PC-3 (cell line): ENCODE measurements at regions of chr18 and their contacts with region 1.

Region 1: DNA sequence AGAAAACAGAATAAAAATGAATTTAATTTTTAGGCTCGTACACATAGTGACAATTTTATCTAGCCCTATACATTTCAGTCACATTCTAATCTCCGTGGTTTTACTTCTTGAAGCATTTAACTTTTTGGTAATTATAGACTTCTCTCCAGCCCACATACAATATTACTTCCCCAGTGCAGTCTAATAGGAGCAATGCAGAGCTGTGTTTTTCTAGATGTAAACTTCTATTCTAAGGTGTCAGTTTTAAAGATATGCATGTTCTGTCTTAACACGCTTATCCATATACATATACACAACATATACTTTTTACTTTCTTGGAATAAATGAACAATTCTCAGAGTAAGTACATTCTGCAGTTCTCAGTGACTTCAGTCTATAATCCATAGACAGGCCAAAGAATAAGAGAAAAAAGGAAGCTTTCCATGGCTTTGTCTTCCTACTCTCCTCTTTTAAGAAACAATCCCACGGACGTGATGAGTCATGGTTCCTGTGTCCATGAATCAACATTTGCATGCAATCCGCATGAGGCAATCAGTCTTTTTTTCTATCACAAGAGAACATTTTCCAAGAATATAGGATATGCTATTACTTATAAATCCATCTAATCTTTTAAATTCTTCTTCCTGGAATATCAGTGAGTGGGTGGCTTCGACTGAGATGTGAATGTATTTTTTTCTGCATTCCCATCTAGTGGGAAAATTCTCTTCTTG is 42.8 kb downstream of the CCDC102B start:
- DNase-seq: peak; percentile 86
- ATAC-seq: peak; percentile 84
- H3K4me3 ChIP-seq: no peak overlapping the region
- H3K27ac ChIP-seq: peak overlapping the region; percentile 94
- H3K4me1 ChIP-seq: peaks cover 25% of the 10 kb centered on the region
- H3K27me3 ChIP-seq: no peaks in the 10 kb centered on the region
- CTCF ChIP-seq: no peak

Region 2: DNA sequence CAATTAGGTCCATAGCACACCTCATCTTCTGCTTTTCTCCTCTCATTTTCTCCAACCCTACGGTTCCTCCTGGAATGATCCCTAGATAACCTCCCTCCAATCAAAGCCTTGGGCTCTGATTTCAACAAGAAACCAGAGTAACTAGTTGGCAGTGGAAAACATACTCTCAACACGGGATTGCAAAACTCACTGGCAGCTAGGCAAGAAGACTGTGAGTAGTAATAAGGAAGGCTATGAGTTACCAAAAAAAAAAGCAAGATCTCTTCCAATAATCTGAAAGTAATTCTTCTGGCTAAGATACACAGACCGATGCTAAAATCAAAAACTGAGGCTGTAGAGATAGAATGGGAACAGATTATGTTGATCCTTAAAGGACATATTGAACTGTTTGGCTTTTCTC is 71.2 kb before region 1 on chr18:
- CTCF ChIA-PET with region 1: no interaction called
- POLR2A ChIA-PET with region 1: no interaction called
- intact Hi-C with region 1: no loop called
- DNase-seq: no peak
- ATAC-seq: no peak
- H3K4me3 ChIP-seq: no peak overlapping the region
- H3K27ac ChIP-seq: no peak overlapping the region
- H3K4me1 ChIP-seq: no peaks in the 10 kb centered on the region
- H3K27me3 ChIP-seq: no peaks in the 10 kb centered on the region
- CTCF ChIP-seq: no peak

Region 3: GRCh38 chr18:68797871-68798270 is 42.8 kb before region 1 on chr18 and contains the start of gene CCDC102B:
- CTCF ChIA-PET with region 1: no interaction called
- POLR2A ChIA-PET with region 1: interaction called, 5 read pairs
- intact Hi-C with region 1: loop called (anchors 2 kb)
- DNase-seq: peak; percentile 52
- ATAC-seq: peak; percentile 95
- H3K4me3 ChIP-seq: peak within 1 kb of the TSS; percentile 9; the same call in 1 of the 2 replicates
- H3K27ac ChIP-seq: peak within 1 kb of the TSS; percentile 90
- H3K4me1 ChIP-seq: peaks cover 19% of the 10 kb centered on the region
- H3K27me3 ChIP-seq: no peaks in the 10 kb centered on the region
- CTCF ChIP-seq: no peak
- total RNA-seq, gene CCDC102B: 2.2 and 2.4 TPM in 2 replicates

Region 4: GRCh38 chr18:70058916-70059315 is 1218.2 kb after region 1 on chr18:
- CTCF ChIA-PET with region 1: no interaction called
- POLR2A ChIA-PET with region 1: interaction called, 11 read pairs
- intact Hi-C with region 1: no loop called
- DNase-seq: no peak
- ATAC-seq: no peak
- H3K4me3 ChIP-seq: no peak overlapping the region
- H3K27ac ChIP-seq: no peak overlapping the region
- H3K4me1 ChIP-seq: no peaks in the 10 kb centered on the region
- H3K27me3 ChIP-seq: no peaks in the 10 kb centered on the region
- CTCF ChIP-seq: no peak